ENCODE measurements at regions of chr3 and their contacts with region 1.

Region 1: GRCh38 chr3:67654099-67654843 is at the start of gene SUCLG2:
- DNase-seq: peak; percentile 56 to 89 (median 81)
- ATAC-seq: peak; percentile 66
- H3K4me3 ChIP-seq: peak within 1 kb of the TSS; percentile 78 to 91
- H3K4me3 Mint-ChIP-seq: peak within 1 kb of the TSS; percentile 86
- H3K27ac ChIP-seq: peak within 1 kb of the TSS; percentile 67 to 84
- H3K27ac Mint-ChIP-seq: peak within 1 kb of the TSS; percentile 91
- H3K4me1 ChIP-seq: peaks cover 55% of the 10 kb centered on the region
- H3K4me1 Mint-ChIP-seq: peaks cover 74% of the 10 kb centered on the region
- H3K27me3 ChIP-seq: no peaks in the 10 kb centered on the region
- H3K27me3 Mint-ChIP-seq: no peaks in the 10 kb centered on the region
- CTCF ChIP-seq: no peak
- total RNA-seq, gene SUCLG2: 39.1 to 40.9 TPM

Region 2: DNA sequence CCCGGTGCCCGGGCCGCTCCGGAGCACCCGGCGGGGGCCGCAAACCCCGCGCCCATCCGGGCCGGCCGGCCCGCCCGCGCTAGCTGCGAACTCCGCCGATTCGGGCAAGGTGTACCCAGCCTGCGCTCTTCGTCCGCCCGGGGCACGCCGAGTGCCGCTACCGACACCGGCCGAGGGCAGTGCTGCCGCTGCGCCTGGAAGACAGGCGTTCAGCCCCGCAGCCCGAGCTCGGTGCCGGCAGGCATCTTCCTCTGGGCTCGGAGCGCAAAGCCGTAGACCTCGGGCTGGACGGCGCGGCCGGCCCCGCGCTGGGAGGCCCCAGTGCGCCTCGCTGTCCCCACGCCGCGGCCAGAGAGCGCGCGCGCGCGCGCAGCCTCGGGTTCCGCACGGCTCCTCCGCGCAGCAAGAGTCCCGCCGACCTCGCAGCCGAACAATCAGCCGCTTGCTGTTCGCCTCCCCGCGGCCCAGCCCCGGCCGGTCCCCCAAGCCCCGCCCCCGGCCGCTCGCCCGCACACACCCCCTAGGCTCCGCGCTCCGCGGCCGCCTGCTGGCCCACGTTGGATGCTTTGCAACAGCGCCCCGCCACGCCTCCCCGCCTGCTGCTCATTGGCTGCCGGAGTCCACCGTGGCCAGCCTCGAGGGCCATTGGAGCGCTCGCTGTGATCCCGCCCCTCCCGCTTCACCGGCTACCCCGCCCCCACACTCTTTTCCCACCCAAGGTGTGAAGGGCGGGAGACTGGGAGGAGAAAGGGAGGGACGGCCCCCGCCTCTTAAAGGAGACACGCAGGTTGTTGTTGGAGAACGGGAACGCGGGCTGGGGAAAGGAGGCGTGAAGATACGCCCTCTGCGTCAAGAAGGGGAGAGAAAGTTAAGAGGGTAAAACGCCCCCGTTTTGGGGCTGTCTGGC is 1153.4 kb before region 1 on chr3 and contains the start of gene LRIG1:
- CTCF ChIA-PET with region 1: no interaction called
- POLR2A ChIA-PET with region 1: no interaction called
- intact Hi-C with region 1: loop called in 1 of 2 experiments (anchors 2 kb)
- DNase-seq: peak; percentile 95 to 98 (median 97)
- ATAC-seq: peak; percentile 94
- H3K4me3 ChIP-seq: peak within 1 kb of the TSS; percentile 54 to 66
- H3K4me3 Mint-ChIP-seq: peak within 1 kb of the TSS; percentile 94
- H3K27ac ChIP-seq: peak within 1 kb of the TSS in 1 of 2 experiments; percentile 29
- H3K27ac Mint-ChIP-seq: peak within 1 kb of the TSS; percentile 69
- H3K4me1 ChIP-seq: peaks cover 35% of the 10 kb centered on the region
- H3K4me1 Mint-ChIP-seq: peaks cover 60% of the 10 kb centered on the region
- H3K27me3 ChIP-seq: peaks cover 0 to 4% of the 10 kb centered on the region in 2 experiments
- H3K27me3 Mint-ChIP-seq: peaks cover 8% of the 10 kb centered on the region
- CTCF ChIP-seq: peak; percentile 54
- total RNA-seq, gene LRIG1: 38.2 to 39.4 TPM

Region 3: GRCh38 chr3:67685499-67685898 is 31.2 kb after region 1 on chr3:
- CTCF ChIA-PET with region 1: no interaction called
- POLR2A ChIA-PET with region 1: interaction called, 7 read pairs
- intact Hi-C with region 1: loop called in 1 of 2 experiments (anchors 1 kb)
- DNase-seq: peak in 2 of 9 experiments; percentile 16 to 43
- ATAC-seq: peak; percentile 52
- H3K4me3 ChIP-seq: peak overlapping the region; percentile 1 to 25
- H3K4me3 Mint-ChIP-seq: peak overlapping the region; percentile 62
- H3K27ac ChIP-seq: peak overlapping the region in 1 of 2 experiments; percentile 17
- H3K27ac Mint-ChIP-seq: peak overlapping the region; percentile 75
- H3K4me1 ChIP-seq: peaks cover 27% of the 10 kb centered on the region
- H3K4me1 Mint-ChIP-seq: peaks cover 32% of the 10 kb centered on the region
- H3K27me3 ChIP-seq: no peaks in the 10 kb centered on the region
- H3K27me3 Mint-ChIP-seq: no peaks in the 10 kb centered on the region
- CTCF ChIP-seq: no peak

Region 4: GRCh38 chr3:67790043-67790442 is 135.8 kb after region 1 on chr3:
- CTCF ChIA-PET with region 1: interaction called, 20 read pairs
- POLR2A ChIA-PET with region 1: interaction called, 4 read pairs
- intact Hi-C with region 1: loop called in 1 of 2 experiments (anchors 2 kb)
- DNase-seq: peak; percentile 47 to 85 (median 64)
- ATAC-seq: peak; percentile 78
- H3K4me3 ChIP-seq: no peak overlapping the region
- H3K4me3 Mint-ChIP-seq: no peak overlapping the region
- H3K27ac ChIP-seq: no peak overlapping the region
- H3K27ac Mint-ChIP-seq: no peak overlapping the region
- H3K4me1 ChIP-seq: peaks cover 6% of the 10 kb centered on the region
- H3K4me1 Mint-ChIP-seq: peaks cover 13% of the 10 kb centered on the region
- H3K27me3 ChIP-seq: no peaks in the 10 kb centered on the region
- H3K27me3 Mint-ChIP-seq: no peaks in the 10 kb centered on the region
- CTCF ChIP-seq: peak; percentile 70

Region 5: GRCh38 chr3:68057637-68058320 is 403.5 kb after region 1 on chr3:
- CTCF ChIA-PET with region 1: no interaction called
- POLR2A ChIA-PET with region 1: no interaction called
- intact Hi-C with region 1: loop called (anchors 2 to 5 kb)
- DNase-seq: peak; percentile 33 to 91 (median 66)
- ATAC-seq: peak; percentile 98
- H3K4me3 ChIP-seq: peak overlapping the region in 1 of 2 experiments; percentile 38
- H3K4me3 Mint-ChIP-seq: peak overlapping the region; percentile 59
- H3K27ac ChIP-seq: peak overlapping the region; percentile 6 to 44
- H3K27ac Mint-ChIP-seq: peak overlapping the region; percentile 79
- H3K4me1 ChIP-seq: peaks cover 59% of the 10 kb centered on the region
- H3K4me1 Mint-ChIP-seq: peaks cover 75% of the 10 kb centered on the region
- H3K27me3 ChIP-seq: no peaks in the 10 kb centered on the region
- H3K27me3 Mint-ChIP-seq: no peaks in the 10 kb centered on the region
- CTCF ChIP-seq: no peak

Region 6: GRCh38 chr3:69084326-69085167 is 1430.3 kb after region 1 on chr3 and contains the start of gene ARL6IP5:
- CTCF ChIA-PET with region 1: no interaction called
- POLR2A ChIA-PET with region 1: no interaction called
- intact Hi-C with region 1: loop called (anchors 5 to 10 kb)
- DNase-seq: peak; percentile 76 to 96 (median 92)
- ATAC-seq: peak; percentile 68
- H3K4me3 ChIP-seq: peak within 1 kb of the TSS; percentile 93 to 96
- H3K4me3 Mint-ChIP-seq: peak within 1 kb of the TSS; percentile 96
- H3K27ac ChIP-seq: peak within 1 kb of the TSS; percentile 56 to 85
- H3K27ac Mint-ChIP-seq: peak within 1 kb of the TSS; percentile 98
- H3K4me1 ChIP-seq: peaks cover 60% of the 10 kb centered on the region
- H3K4me1 Mint-ChIP-seq: peaks cover 70% of the 10 kb centered on the region
- H3K27me3 ChIP-seq: no peaks in the 10 kb centered on the region
- H3K27me3 Mint-ChIP-seq: no peaks in the 10 kb centered on the region
- CTCF ChIP-seq: no peak
- total RNA-seq, gene ARL6IP5: 44.8 to 52.9 TPM

Measured in CD8-positive, alpha-beta T cell (primary cell).